ENCODE measurements at regions of chr17 and their contacts with region 1.

Region 1: GRCh38 chr17:82494236-82495055 is 25.1 kb upstream of the FOXK2 start:
- DNase-seq: peak; percentile 94
- H3K4me3 Mint-ChIP-seq: peak overlapping the region; percentile 70
- H3K27ac Mint-ChIP-seq: peak overlapping the region; percentile 81
- H3K4me1 Mint-ChIP-seq: peaks cover 21% of the 10 kb centered on the region
- H3K27me3 Mint-ChIP-seq: no peaks in the 10 kb centered on the region

Region 2: DNA sequence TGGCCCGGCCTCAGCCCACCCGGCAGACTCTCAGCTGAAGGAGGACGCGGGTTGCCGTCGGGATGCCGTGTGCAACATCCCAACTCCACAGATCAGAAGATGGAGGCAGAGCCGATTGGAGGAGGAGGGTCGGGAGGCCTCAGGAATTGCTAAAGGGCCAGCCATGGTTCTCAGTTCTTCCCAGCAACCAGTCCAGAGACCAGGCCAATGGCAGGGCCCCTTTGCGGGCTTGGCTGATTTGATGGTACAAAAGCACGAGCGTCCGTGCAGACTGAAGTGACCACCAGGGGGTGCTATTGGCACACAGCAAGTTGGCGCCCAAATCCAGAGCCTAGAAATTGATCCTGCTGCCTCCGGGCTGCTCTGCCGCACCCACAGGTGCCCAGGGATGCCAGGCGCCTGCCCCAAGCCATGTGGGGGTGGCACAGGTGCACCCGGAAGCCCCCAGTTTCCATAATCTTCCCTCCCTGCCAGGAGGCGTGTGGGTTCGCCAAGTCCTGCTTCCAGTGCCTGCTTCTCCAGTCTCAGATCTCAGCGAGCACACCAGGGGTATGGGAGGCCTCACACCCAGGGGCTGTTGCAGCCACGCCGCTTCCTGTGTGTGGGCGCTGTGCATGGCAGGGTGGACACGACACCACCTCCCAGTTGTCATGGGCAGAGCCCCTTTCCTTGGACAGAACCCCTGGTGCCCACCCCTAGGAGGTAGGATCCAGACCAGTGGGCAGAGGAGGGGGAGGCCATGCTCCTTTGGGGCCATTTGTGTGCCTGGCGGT is 142.5 kb before region 1 on chr17:
- CTCF ChIA-PET with region 1: interaction called, 4 read pairs
- intact Hi-C with region 1: loop called (anchors 1 kb)
- DNase-seq: peak; percentile 89
- H3K4me3 Mint-ChIP-seq: no peak overlapping the region
- H3K27ac Mint-ChIP-seq: no peak overlapping the region
- H3K4me1 Mint-ChIP-seq: no peaks in the 10 kb centered on the region
- H3K27me3 Mint-ChIP-seq: no peaks in the 10 kb centered on the region

Region 3: DNA sequence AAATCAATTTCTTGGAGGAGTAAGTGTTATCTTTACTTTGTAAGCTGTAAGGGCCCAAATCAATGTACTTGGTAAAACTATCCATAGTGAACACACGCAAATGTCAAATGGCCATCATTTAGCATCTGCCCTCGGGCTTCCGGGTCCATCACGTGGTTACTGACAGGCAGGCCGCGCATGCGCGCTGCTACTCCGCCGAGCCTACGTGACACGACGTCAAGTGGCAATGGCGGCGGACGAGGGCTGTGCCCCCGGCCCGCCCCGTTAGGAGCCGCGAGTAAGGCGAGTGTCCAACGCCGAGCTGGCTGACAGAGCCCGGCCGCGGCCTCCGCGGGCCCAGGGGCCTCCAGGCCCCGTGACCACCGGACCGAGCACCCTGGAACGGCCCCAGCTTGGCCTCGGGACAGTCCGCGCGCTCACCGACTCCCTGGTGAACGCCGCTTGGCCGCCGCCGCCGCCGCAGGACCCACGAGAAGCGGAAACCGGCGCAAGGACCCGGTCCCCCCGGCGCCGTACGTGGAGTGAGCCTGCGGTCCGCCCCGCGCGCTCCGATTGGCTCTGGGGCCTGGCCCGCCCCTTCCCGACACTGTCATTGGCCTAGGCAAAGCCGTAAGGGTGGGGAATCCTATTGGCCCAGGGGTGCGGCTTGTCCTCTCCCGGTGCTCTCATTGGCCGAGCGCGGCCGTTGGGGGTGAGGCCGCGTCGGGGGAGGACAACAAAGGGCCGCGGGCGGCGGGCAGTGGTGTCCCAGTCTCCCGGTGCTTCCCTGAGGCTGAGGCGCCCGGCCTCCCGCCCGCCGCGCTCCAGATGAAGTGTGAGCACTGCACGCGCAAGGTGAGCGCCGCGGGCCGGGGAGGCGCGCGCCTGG is 36.2 kb before region 1 on chr17 and contains the start of gene NARF:
- CTCF ChIA-PET with region 1: interaction called, 3 read pairs
- intact Hi-C with region 1: loop called (anchors 1 kb)
- DNase-seq: peak; percentile 97
- H3K4me3 Mint-ChIP-seq: peak within 1 kb of the TSS; percentile 78
- H3K27ac Mint-ChIP-seq: peak within 1 kb of the TSS; percentile 97
- H3K4me1 Mint-ChIP-seq: peaks cover 27% of the 10 kb centered on the region
- H3K27me3 Mint-ChIP-seq: no peaks in the 10 kb centered on the region
- total RNA-seq, gene NARF: 64.2 to 69.3 TPM

Region 4: GRCh38 chr17:82483836-82484235 is 10.6 kb before region 1 on chr17:
- CTCF ChIA-PET with region 1: no interaction called
- intact Hi-C with region 1: no loop called
- DNase-seq: no peak
- H3K4me3 Mint-ChIP-seq: no peak overlapping the region
- H3K27ac Mint-ChIP-seq: no peak overlapping the region
- H3K4me1 Mint-ChIP-seq: peaks cover 3% of the 10 kb centered on the region
- H3K27me3 Mint-ChIP-seq: no peaks in the 10 kb centered on the region

Region 5: DNA sequence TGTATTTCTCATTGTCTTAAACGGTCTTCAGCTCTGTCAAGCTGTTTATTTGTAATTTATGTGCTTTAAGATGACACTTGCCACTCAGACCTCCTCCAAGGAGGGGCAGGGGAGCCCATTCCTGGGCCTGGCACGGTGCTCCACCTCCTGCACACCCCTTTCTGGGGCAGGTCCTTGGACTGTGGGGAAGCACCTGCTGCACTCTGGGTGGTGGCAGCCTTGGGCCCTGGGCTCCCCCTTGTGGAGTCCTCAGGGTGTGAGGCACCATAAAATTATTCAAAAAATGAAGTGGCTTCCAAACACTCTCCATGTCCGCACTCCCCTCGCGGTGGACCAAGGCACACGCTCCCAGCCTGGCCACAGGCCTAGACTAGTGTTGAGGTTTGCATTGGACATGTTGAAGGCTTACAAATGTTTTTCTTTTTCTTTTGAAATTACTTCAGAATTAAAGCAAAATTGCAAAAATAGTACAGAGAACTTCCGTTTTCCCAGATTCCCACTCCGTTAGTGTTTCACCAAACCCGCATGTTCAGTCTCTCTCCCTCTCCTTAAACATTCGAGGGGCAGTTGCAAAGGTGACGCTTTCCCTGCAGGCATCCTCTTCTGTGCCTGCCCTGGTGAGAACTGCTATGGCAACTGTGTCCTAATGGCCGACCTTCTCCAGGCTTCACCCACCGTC is 57.5 kb after region 1 on chr17:
- CTCF ChIA-PET with region 1: interaction called, 3 read pairs
- intact Hi-C with region 1: loop called (anchors 1 kb)
- DNase-seq: peak; percentile 90
- H3K4me3 Mint-ChIP-seq: no peak overlapping the region
- H3K27ac Mint-ChIP-seq: peak overlapping the region; percentile 54
- H3K4me1 Mint-ChIP-seq: peaks cover 32% of the 10 kb centered on the region
- H3K27me3 Mint-ChIP-seq: no peaks in the 10 kb centered on the region

Region 6: DNA sequence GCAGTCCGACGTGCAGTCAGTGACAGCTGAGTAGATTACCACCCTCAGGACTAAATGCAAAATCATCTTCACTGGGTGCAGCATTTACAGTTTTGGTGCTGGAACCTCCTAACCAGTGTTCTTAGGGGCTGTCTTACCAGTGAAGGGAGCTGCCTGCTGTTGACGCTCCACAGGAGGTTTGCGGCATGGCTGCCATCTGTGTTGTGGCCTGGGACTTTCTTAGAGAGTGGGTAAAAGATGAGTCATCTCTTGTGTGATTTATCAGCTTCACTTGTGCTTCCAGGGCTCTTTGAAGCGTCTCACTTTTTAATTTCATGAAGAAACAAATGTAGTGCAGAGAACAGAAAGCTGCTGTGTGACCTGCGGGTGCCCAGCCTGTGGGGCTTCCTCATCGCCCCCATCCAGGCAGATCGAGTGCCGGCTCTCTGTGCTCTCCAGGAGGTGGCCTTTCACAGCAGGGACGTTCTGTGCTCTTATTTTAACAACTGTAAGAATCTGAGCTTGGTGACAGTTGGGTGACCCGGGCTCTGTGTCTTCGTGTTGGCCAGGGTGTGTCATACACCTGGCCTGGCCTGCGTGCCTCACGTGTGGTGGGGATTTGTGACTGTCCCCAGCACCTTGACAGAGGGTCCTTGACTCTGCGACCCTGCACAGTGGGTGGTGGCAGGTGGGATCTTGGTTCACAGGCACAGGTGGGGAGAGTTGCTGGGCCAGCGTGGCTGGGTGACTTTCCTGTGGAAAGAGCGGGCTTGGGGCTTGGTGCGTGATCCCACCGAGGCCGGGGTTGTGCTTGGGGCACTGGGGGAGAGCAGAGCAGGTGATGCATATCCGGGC is 369.7 kb after region 1 on chr17:
- CTCF ChIA-PET with region 1: no interaction called
- intact Hi-C with region 1: loop called (anchors 10 kb)
- DNase-seq: peak; percentile 95
- H3K4me3 Mint-ChIP-seq: peak overlapping the region; percentile 57
- H3K27ac Mint-ChIP-seq: peak overlapping the region; percentile 93
- H3K4me1 Mint-ChIP-seq: peaks cover 74% of the 10 kb centered on the region
- H3K27me3 Mint-ChIP-seq: no peaks in the 10 kb centered on the region

Measured in activated naive CD4-positive, alpha-beta T cell treated with anti-CD3 and anti-CD28 coated beads for 36 hours (primary cell).